CD8-positive, alpha-beta T cell (primary cell): ENCODE measurements at regions of chr1 and their contacts with region 1.

Region 1: GRCh38 chr1:6245086-6245868 is 1.3 kb downstream of the HES3 start:
- DNase-seq: peak; percentile 61 to 89 (median 74)
- ATAC-seq: peak; percentile 86
- H3K4me3 ChIP-seq: no peak overlapping the region
- H3K4me3 Mint-ChIP-seq: no peak overlapping the region
- H3K27ac ChIP-seq: no peak overlapping the region
- H3K27ac Mint-ChIP-seq: no peak overlapping the region
- H3K4me1 ChIP-seq: peaks cover 15% of the 10 kb centered on the region
- H3K4me1 Mint-ChIP-seq: peaks cover 11% of the 10 kb centered on the region
- H3K27me3 ChIP-seq: peaks cover 51 to 55% of the 10 kb centered on the region in 2 experiments
- H3K27me3 Mint-ChIP-seq: peaks cover 52% of the 10 kb centered on the region
- CTCF ChIP-seq: peak; percentile 65

Region 2: GRCh38 chr1:6108937-6109614 is 136.2 kb before region 1 on chr1:
- CTCF ChIA-PET with region 1: interaction called, 5 read pairs
- POLR2A ChIA-PET with region 1: no interaction called
- intact Hi-C with region 1: loop called in 1 of 2 experiments (anchors 1 kb)
- DNase-seq: peak in 4 of 9 experiments; percentile 24 to 52 (median 33)
- ATAC-seq: peak; percentile 71
- H3K4me3 ChIP-seq: no peak overlapping the region
- H3K4me3 Mint-ChIP-seq: no peak overlapping the region
- H3K27ac ChIP-seq: no peak overlapping the region
- H3K27ac Mint-ChIP-seq: no peak overlapping the region
- H3K4me1 ChIP-seq: no peaks in the 10 kb centered on the region
- H3K4me1 Mint-ChIP-seq: no peaks in the 10 kb centered on the region
- H3K27me3 ChIP-seq: peaks cover 4 to 8% of the 10 kb centered on the region in 2 experiments
- H3K27me3 Mint-ChIP-seq: peaks cover 15% of the 10 kb centered on the region
- CTCF ChIP-seq: no peak

Region 3: GRCh38 chr1:6343506-6344405 is 98.5 kb after region 1 on chr1:
- CTCF ChIA-PET with region 1: interaction called, 54 read pairs
- POLR2A ChIA-PET with region 1: interaction called, 3 read pairs
- intact Hi-C with region 1: loop called in 1 of 2 experiments (anchors 1 kb)
- DNase-seq: peak; percentile 22 to 73 (median 61)
- ATAC-seq: peak; percentile 63
- H3K4me3 ChIP-seq: no peak overlapping the region
- H3K4me3 Mint-ChIP-seq: no peak overlapping the region
- H3K27ac ChIP-seq: no peak overlapping the region
- H3K27ac Mint-ChIP-seq: no peak overlapping the region
- H3K4me1 ChIP-seq: peaks cover 13% of the 10 kb centered on the region
- H3K4me1 Mint-ChIP-seq: peaks cover 10% of the 10 kb centered on the region
- H3K27me3 ChIP-seq: no peaks in the 10 kb centered on the region
- H3K27me3 Mint-ChIP-seq: no peaks in the 10 kb centered on the region
- CTCF ChIP-seq: peak; percentile 52

Region 4: DNA sequence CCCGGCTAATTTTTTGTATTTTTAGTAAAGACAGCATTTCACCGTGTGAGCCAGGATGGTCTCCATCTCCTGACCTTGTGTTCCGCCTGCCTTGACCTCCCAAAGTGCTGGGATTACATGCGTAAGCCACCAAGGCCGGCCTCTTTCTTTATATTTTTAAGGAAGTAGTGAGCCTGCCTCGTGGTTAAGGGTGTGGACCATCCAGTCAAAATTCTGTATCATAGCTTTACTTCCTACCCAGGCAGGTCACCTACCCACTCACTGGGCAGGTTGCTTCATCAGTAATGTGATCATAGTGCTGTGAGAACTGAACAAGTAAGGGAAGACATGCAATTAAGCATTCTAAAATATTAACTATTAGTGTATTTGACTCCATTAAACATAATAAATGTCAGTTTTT is 156.4 kb after region 1 on chr1:
- CTCF ChIA-PET with region 1: interaction called, 128 read pairs
- POLR2A ChIA-PET with region 1: no interaction called
- intact Hi-C with region 1: loop called (anchors 1 kb)
- DNase-seq: no peak
- ATAC-seq: no peak
- H3K4me3 ChIP-seq: no peak overlapping the region
- H3K4me3 Mint-ChIP-seq: no peak overlapping the region
- H3K27ac ChIP-seq: no peak overlapping the region
- H3K27ac Mint-ChIP-seq: no peak overlapping the region
- H3K4me1 ChIP-seq: no peaks in the 10 kb centered on the region
- H3K4me1 Mint-ChIP-seq: peaks cover 4% of the 10 kb centered on the region
- H3K27me3 ChIP-seq: no peaks in the 10 kb centered on the region
- H3K27me3 Mint-ChIP-seq: peaks cover 7% of the 10 kb centered on the region
- CTCF ChIP-seq: no peak

Region 5: DNA sequence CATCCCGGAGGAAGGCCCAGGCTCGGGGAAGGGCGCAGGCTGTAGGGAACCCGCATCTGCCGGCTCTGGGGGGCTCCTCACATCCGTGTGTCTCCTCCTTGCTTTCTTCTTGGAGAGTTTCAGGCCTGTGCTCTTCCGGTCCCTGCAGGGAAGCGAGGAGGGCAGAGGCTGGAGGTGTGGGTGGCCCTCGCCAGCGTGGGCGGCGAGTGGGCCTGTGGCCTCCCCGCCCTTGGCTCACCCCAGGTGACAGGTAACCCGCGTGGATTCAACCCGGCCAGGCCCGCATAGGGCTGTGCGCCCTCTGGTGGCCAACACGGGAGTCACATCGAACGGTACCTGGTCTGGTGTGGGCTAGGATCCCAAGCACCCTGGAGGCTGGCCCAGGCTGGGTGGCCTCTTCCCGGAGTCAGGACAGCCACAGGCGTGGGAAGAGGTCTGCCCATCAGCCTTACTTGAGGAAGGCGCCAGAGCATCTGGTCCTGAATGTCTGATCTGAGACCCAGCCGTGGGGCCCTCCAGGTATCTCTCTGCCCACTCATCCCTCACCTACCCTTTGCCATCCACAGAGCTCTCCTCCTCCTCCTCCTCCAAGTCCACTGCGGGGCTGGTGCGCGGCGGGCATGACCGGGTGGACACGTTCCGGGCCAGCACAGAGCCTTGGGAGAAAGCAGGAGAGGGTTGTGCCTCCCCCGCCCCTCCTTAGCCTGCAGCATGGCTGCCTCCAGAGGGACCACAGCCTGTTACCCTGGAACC is 230.3 kb after region 1 on chr1:
- CTCF ChIA-PET with region 1: interaction called, 8 read pairs
- POLR2A ChIA-PET with region 1: no interaction called
- intact Hi-C with region 1: loop called (anchors 1 to 5 kb)
- DNase-seq: peak; percentile 63 to 93 (median 82)
- ATAC-seq: peak; percentile 99
- H3K4me3 ChIP-seq: no peak overlapping the region
- H3K4me3 Mint-ChIP-seq: no peak overlapping the region
- H3K27ac ChIP-seq: no peak overlapping the region
- H3K27ac Mint-ChIP-seq: no peak overlapping the region
- H3K4me1 ChIP-seq: peaks cover 8% of the 10 kb centered on the region
- H3K4me1 Mint-ChIP-seq: peaks cover 6% of the 10 kb centered on the region
- H3K27me3 ChIP-seq: no peaks in the 10 kb centered on the region
- H3K27me3 Mint-ChIP-seq: no peaks in the 10 kb centered on the region
- CTCF ChIP-seq: peak; percentile 84